Activated CD8-positive, alpha-beta T cell treated with anti-CD3 and anti-CD28 coated beads for 36 hours (primary cell): ENCODE measurements at regions of chr11 and their contacts with region 1.

Region 1: DNA sequence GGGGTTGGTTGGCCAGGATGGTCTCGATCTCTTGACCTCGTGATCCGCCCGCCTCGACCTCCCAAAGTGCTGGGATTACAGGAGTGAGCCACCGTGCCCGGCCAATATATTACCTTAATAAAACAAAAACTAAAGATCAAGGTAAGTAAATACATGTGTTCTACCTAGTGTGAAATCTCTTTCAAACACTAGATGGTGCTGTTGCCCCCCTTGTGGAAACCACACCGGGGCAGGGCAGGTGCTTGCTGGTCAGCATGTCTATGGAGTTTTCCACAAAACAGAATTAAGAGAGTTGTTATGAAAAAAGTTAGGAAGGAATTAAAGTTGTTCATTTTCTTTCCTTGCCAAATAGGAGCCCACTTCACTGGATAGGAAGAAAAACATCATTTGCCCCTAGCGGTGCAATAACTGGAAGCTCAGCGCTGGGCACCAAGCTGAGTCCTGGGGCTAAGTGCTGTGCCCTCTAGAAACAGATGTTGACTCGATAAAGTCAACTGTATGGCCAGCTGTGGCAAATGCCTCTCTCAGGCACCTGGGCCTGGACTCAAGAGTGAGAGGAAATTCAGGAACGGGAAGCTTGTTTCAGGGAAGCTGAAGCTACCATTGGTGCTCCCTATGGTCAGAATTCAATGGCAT is 6.3 kb upstream of the KCNJ5 start:
- DNase-seq: peak; percentile 67
- ATAC-seq: peak; percentile 84
- H3K4me3 Mint-ChIP-seq: no peak overlapping the region
- H3K27ac Mint-ChIP-seq: no peak overlapping the region
- H3K4me1 Mint-ChIP-seq: peaks cover 4% of the 10 kb centered on the region
- H3K27me3 Mint-ChIP-seq: peaks cover 46% of the 10 kb centered on the region
- CTCF ChIP-seq: peak; percentile 92

Region 2: GRCh38 chr11:128848815-128849455 is 35.9 kb before region 1 on chr11:
- CTCF ChIA-PET with region 1: interaction called, 10 read pairs
- POLR2A ChIA-PET with region 1: no interaction called
- intact Hi-C with region 1: no loop called
- DNase-seq: peak; percentile 84
- ATAC-seq: peak; percentile 90
- H3K4me3 Mint-ChIP-seq: no peak overlapping the region
- H3K27ac Mint-ChIP-seq: no peak overlapping the region
- H3K4me1 Mint-ChIP-seq: peaks cover 21% of the 10 kb centered on the region
- H3K27me3 Mint-ChIP-seq: no peaks in the 10 kb centered on the region
- CTCF ChIP-seq: peak; percentile 81

Region 3: GRCh38 chr11:128874427-128874826 is 10.4 kb before region 1 on chr11:
- CTCF ChIA-PET with region 1: interaction called, 31 read pairs
- POLR2A ChIA-PET with region 1: no interaction called
- intact Hi-C with region 1: no loop called
- DNase-seq: no peak
- ATAC-seq: no peak
- H3K4me3 Mint-ChIP-seq: no peak overlapping the region
- H3K27ac Mint-ChIP-seq: no peak overlapping the region
- H3K4me1 Mint-ChIP-seq: no peaks in the 10 kb centered on the region
- H3K27me3 Mint-ChIP-seq: peaks cover 3% of the 10 kb centered on the region
- CTCF ChIP-seq: no peak

Region 4: DNA sequence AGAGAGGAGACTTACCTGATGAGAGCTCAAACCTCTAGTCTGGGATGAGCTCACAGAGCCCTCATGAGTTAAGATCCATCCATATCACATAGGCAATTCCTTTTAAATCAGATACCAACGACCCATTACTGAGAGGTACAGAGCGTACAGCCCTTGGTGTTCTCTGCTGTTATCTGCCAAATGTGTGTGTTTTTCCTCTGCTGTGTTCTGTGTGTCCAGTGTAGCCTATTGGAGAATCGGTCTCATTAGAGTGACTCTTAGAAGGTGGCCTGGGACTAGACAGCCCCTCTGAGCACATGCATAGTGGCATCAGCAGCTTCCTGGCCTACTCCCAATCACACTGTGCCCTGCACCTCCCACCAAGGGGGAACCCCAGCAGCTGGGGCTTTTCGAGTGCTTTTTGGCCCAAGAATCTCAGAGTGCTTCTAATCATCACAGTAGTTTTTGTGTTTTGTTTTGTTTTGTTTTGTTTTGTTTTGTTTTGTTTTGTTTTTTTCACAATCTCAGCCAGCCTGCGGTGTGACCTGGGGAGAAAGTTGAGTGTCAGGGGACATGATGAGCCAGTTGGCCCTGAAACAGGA is 32.4 kb after region 1 on chr11:
- CTCF ChIA-PET with region 1: interaction called, 22 read pairs
- POLR2A ChIA-PET with region 1: no interaction called
- intact Hi-C with region 1: no loop called
- DNase-seq: no peak
- ATAC-seq: no peak
- H3K4me3 Mint-ChIP-seq: no peak overlapping the region
- H3K27ac Mint-ChIP-seq: no peak overlapping the region
- H3K4me1 Mint-ChIP-seq: peaks cover 4% of the 10 kb centered on the region
- H3K27me3 Mint-ChIP-seq: peaks cover 7% of the 10 kb centered on the region
- CTCF ChIP-seq: no peak

Region 5: GRCh38 chr11:128936606-128937251 is 51.9 kb after region 1 on chr11:
- CTCF ChIA-PET with region 1: interaction called, 15 read pairs
- POLR2A ChIA-PET with region 1: no interaction called
- intact Hi-C with region 1: no loop called
- DNase-seq: no peak
- ATAC-seq: no peak
- H3K4me3 Mint-ChIP-seq: no peak overlapping the region
- H3K27ac Mint-ChIP-seq: no peak overlapping the region
- H3K4me1 Mint-ChIP-seq: no peaks in the 10 kb centered on the region
- H3K27me3 Mint-ChIP-seq: no peaks in the 10 kb centered on the region
- CTCF ChIP-seq: no peak

Region 6: GRCh38 chr11:128956401-128957201 is 71.8 kb after region 1 on chr11:
- CTCF ChIA-PET with region 1: interaction called, 283 read pairs
- POLR2A ChIA-PET with region 1: interaction called, 3 read pairs
- intact Hi-C with region 1: loop called (anchors 1 kb)
- DNase-seq: peak; percentile 21
- ATAC-seq: peak; percentile 55
- H3K4me3 Mint-ChIP-seq: no peak overlapping the region
- H3K27ac Mint-ChIP-seq: no peak overlapping the region
- H3K4me1 Mint-ChIP-seq: peaks cover 2% of the 10 kb centered on the region
- H3K27me3 Mint-ChIP-seq: peaks cover 6% of the 10 kb centered on the region
- CTCF ChIP-seq: peak; percentile 87